Panc1 (cell line): ENCODE measurements at regions of chr2 and their contacts with region 1.

Region 1: GRCh38 chr2:25700221-25700660 is 26.9 kb upstream of the DTNB start:
- DNase-seq: peak; percentile 61
- ATAC-seq: peak; percentile 78
- H3K4me3 ChIP-seq: no peak overlapping the region
- H3K27ac ChIP-seq: no peak overlapping the region
- H3K4me1 ChIP-seq: peaks cover 13% of the 10 kb centered on the region
- H3K27me3 ChIP-seq: no peaks in the 10 kb centered on the region
- CTCF ChIP-seq: peak; percentile 89

Region 2: DNA sequence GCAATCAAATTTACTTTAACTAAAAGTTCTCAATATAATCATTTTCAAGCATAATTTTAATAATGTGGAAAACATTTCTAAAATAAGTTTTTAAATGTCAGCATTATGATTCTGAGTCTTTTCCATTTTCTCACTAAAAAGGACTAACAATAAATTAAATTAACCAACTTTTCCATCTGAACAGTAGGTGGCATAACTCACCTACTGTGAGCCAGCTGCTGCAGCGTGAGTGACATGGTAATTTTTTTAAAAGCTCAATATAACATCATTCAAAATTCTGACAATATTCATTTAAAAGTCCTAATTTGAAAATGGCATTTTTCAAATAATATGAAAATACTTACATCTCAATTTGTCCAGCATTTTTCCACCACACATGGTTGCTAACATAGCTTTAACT is 93.3 kb before region 1 on chr2:
- CTCF ChIA-PET with region 1: interaction called, 25 read pairs
- POLR2A ChIA-PET with region 1: interaction called, 3 read pairs
- in situ Hi-C with region 1: no loop called
- intact Hi-C with region 1: no loop called
- DNase-seq: peak; percentile 35
- ATAC-seq: no peak
- H3K4me3 ChIP-seq: no peak overlapping the region
- H3K27ac ChIP-seq: no peak overlapping the region
- H3K4me1 ChIP-seq: no peaks in the 10 kb centered on the region
- H3K27me3 ChIP-seq: no peaks in the 10 kb centered on the region
- CTCF ChIP-seq: peak; percentile 74; the same call in 1 of the 2 replicates

Region 3: DNA sequence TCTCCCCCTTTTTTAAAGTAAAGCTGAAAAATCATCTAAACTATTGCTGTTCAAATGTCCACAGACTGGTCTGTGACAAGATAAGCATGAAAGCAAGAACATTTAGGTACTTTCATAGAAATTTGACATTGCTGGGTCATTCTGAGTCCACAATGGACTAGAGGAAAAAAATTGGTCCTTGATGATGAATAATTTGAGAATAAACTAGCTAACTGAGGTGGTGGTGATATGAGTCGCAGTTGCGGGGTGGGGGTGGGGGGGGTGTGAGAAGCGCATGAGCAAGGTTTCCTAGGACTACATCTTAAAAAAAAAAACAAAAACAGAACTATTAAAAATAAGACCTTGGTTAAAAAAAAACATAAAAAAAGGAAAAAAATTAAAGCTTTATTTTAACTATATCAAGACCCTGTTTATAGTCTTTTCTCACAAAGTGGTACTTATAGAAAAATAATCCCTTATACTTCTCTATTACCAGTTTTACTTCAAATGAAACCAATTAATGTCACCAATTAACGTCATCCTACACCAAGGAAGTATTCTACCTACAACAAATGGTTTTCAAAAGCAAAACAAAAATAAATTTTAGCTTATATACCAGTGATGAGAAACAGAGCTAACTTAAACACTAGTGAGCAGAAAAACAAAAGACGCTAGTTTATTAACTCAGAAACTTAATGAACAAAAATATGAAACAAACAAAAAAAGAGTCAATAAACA is 90.0 kb after region 1 on chr2:
- CTCF ChIA-PET with region 1: no interaction called
- POLR2A ChIA-PET with region 1: no interaction called
- in situ Hi-C with region 1: no loop called
- intact Hi-C with region 1: no loop called
- DNase-seq: no peak
- ATAC-seq: no peak
- H3K4me3 ChIP-seq: no peak overlapping the region
- H3K27ac ChIP-seq: no peak overlapping the region
- H3K4me1 ChIP-seq: no peaks in the 10 kb centered on the region
- H3K27me3 ChIP-seq: no peaks in the 10 kb centered on the region
- CTCF ChIP-seq: no peak

Region 4: GRCh38 chr2:25851740-25852503 is 151.7 kb after region 1 on chr2:
- CTCF ChIA-PET with region 1: interaction called, 14 read pairs
- POLR2A ChIA-PET with region 1: no interaction called
- in situ Hi-C with region 1: no loop called
- intact Hi-C with region 1: no loop called
- DNase-seq: peak; percentile 81
- ATAC-seq: peak; percentile 90
- H3K4me3 ChIP-seq: peak overlapping the region; percentile 19 to 21
- H3K27ac ChIP-seq: peak overlapping the region; percentile 78
- H3K4me1 ChIP-seq: peaks cover 30% of the 10 kb centered on the region
- H3K27me3 ChIP-seq: no peaks in the 10 kb centered on the region
- CTCF ChIP-seq: peak; percentile 72

Region 5: GRCh38 chr2:26330113-26330549 is 629.9 kb after region 1 on chr2:
- CTCF ChIA-PET with region 1: no interaction called
- POLR2A ChIA-PET with region 1: interaction called, 11 read pairs
- in situ Hi-C with region 1: no loop called
- intact Hi-C with region 1: no loop called
- DNase-seq: peak; percentile 71
- ATAC-seq: peak; percentile 98
- H3K4me3 ChIP-seq: no peak overlapping the region
- H3K27ac ChIP-seq: no peak overlapping the region
- H3K4me1 ChIP-seq: no peaks in the 10 kb centered on the region
- H3K27me3 ChIP-seq: no peaks in the 10 kb centered on the region
- CTCF ChIP-seq: peak; percentile 94